Ovary (tissue), 10 donors: ENCODE measurements at regions of chr22 and their contacts with region 1.

Region 1: GRCh38 chr22:49930739-49931412 is 12.4 kb downstream of the CRELD2 start:
- DNase-seq: peak in 2 of 5 donors; percentile 51 to 65
- H3K4me3 ChIP-seq: no peak overlapping the region
- H3K27ac ChIP-seq: peak overlapping the region in 1 of 2 donors; percentile 38
- H3K4me1 ChIP-seq: peaks cover 7% of the 10 kb centered on the region
- H3K27me3 ChIP-seq: no peaks in the 10 kb centered on the region
- CTCF ChIP-seq: no peak
- EP300 ChIP-seq: no peak
- POLR2A ChIP-seq: no peak

Region 2: GRCh38 chr22:49970528-49971231 is 39.8 kb after region 1 on chr22:
- intact Hi-C with region 1: loop called (anchors 5 kb)
- DNase-seq: peak; percentile 87 to 93 (median 89)
- H3K4me3 ChIP-seq: peak overlapping the region; percentile 53
- H3K27ac ChIP-seq: peak overlapping the region in 1 of 2 donors; percentile 30
- H3K4me1 ChIP-seq: peaks cover 28% of the 10 kb centered on the region
- H3K27me3 ChIP-seq: no peaks in the 10 kb centered on the region
- CTCF ChIP-seq: no peak
- EP300 ChIP-seq: peak; percentile 51
- POLR2A ChIP-seq: peak; percentile 73

Region 3: GRCh38 chr22:50030297-50031188 is 99.7 kb after region 1 on chr22:
- intact Hi-C with region 1: loop called (anchors 2 to 5 kb)
- DNase-seq: peak; percentile 62 to 86 (median 72)
- H3K4me3 ChIP-seq: no peak overlapping the region
- H3K27ac ChIP-seq: no peak overlapping the region
- H3K4me1 ChIP-seq: no peaks in the 10 kb centered on the region
- H3K27me3 ChIP-seq: no peaks in the 10 kb centered on the region
- CTCF ChIP-seq: peak; percentile 74 to 94 (median 89)
- EP300 ChIP-seq: no peak
- POLR2A ChIP-seq: no peak

Region 4: GRCh38 chr22:50112151-50113118 is 181.6 kb after region 1 on chr22:
- intact Hi-C with region 1: loop called in 1 of 4 experiments (anchors 10 kb)
- DNase-seq: peak in 1 of 5 donors; percentile 46
- H3K4me3 ChIP-seq: no peak overlapping the region
- H3K27ac ChIP-seq: no peak overlapping the region
- H3K4me1 ChIP-seq: peaks cover 3% of the 10 kb centered on the region
- H3K27me3 ChIP-seq: no peaks in the 10 kb centered on the region
- CTCF ChIP-seq: no peak
- EP300 ChIP-seq: no peak
- POLR2A ChIP-seq: no peak

Region 5: DNA sequence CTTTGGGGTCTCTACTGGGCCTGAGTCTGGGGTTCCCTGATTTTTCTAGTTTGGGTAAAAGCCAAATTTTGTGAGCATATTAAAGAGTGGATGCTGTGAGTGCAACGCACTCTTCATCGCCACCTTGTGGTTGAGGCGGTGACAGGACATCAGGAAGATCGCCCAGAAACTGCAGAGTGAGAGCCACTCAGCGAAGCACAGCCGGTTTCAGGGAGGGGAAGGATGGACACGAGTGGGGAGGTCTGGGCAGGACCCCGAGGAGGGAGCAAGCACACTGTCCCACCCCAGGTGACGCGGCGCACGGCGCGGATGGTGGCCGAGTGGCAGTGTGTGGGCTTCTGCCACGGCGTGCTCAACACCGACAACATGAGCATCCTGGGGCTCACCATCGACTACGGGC is 279.0 kb after region 1 on chr22:
- intact Hi-C with region 1: loop called in 2 of 4 experiments (anchors 2 to 5 kb)
- DNase-seq: peak; percentile 64 to 83 (median 78)
- H3K4me3 ChIP-seq: no peak overlapping the region
- H3K27ac ChIP-seq: peak overlapping the region in 1 of 2 donors; percentile 4
- H3K4me1 ChIP-seq: peaks cover 4% of the 10 kb centered on the region
- H3K27me3 ChIP-seq: no peaks in the 10 kb centered on the region
- CTCF ChIP-seq: peak; percentile 70 to 86 (median 86)
- EP300 ChIP-seq: no peak
- POLR2A ChIP-seq: no peak

Region 6: DNA sequence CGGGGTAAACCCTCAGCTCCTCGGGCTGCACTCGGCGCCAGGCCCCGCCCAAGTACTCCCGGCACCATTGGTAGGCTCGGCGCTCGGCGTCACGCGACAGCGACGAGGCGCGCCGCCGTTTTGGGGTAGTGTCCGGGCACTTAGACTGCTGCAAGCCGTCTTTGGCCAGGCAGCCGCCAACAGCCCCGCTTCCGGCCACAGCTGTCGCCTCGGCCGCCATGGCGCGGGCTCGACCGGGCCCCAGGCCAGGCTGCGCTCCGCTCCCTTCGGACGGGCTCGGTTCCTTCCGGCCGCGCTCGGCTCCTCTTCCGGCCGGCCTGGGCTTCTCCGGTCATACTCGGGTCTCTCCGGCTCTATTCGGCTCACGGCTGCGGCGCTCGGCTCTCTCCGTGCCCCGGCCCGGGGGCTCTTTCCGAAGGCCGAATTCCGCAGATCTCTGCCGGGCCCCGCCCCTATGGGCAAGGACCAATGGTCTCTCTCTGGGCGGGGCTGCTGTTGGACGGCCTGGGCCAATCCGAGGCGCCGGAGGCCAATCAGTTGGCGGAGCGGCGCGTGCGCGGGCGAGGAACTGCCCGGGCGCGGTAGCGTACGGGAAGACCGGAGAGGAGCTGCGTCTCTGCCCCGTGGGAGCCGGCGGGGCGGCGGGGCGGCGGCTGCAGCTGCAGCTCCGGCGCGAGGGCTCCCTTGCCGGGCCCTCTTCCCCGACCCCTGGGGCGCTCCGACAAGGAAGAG is 651.9 kb after region 1 on chr22 and contains the start of gene CHKB:
- intact Hi-C with region 1: no loop called
- DNase-seq: peak; percentile 98 to 99 (median 99)
- H3K4me3 ChIP-seq: peak within 1 kb of the TSS; percentile 86
- H3K27ac ChIP-seq: peak within 1 kb of the TSS; percentile 59 to 94
- H3K4me1 ChIP-seq: peaks cover 13% of the 10 kb centered on the region
- H3K27me3 ChIP-seq: no peaks in the 10 kb centered on the region
- CTCF ChIP-seq: no peak
- EP300 ChIP-seq: no peak
- POLR2A ChIP-seq: peak; percentile 78
- total RNA-seq, gene CHKB: 34.9 to 73.2 (median 48.8) TPM